ENCODE measurements at regions of chr1 and their contacts with region 1.

Region 1: GRCh38 chr1:6727535-6727934 is 25.9 kb upstream of the DNAJC11 start:
- H3K4me3 Mint-ChIP-seq: no peak overlapping the region
- H3K27ac Mint-ChIP-seq: no peak overlapping the region
- H3K4me1 Mint-ChIP-seq: peaks cover 5% of the 10 kb centered on the region
- H3K27me3 Mint-ChIP-seq: peaks cover 4% of the 10 kb centered on the region

Region 2: GRCh38 chr1:6743189-6744101 is 15.9 kb after region 1 on chr1:
- intact Hi-C with region 1: no loop called
- H3K4me3 Mint-ChIP-seq: peak overlapping the region; percentile 53
- H3K27ac Mint-ChIP-seq: peak overlapping the region; percentile 93
- H3K4me1 Mint-ChIP-seq: peaks cover 39% of the 10 kb centered on the region
- H3K27me3 Mint-ChIP-seq: no peaks in the 10 kb centered on the region

Region 3: GRCh38 chr1:6784560-6785317 is 57.2 kb after region 1 on chr1:
- intact Hi-C with region 1: loop called (anchors 5 kb)
- H3K4me3 Mint-ChIP-seq: peak overlapping the region; percentile 92
- H3K27ac Mint-ChIP-seq: peak overlapping the region; percentile 98
- H3K4me1 Mint-ChIP-seq: peaks cover 43% of the 10 kb centered on the region
- H3K27me3 Mint-ChIP-seq: no peaks in the 10 kb centered on the region

Region 4: DNA sequence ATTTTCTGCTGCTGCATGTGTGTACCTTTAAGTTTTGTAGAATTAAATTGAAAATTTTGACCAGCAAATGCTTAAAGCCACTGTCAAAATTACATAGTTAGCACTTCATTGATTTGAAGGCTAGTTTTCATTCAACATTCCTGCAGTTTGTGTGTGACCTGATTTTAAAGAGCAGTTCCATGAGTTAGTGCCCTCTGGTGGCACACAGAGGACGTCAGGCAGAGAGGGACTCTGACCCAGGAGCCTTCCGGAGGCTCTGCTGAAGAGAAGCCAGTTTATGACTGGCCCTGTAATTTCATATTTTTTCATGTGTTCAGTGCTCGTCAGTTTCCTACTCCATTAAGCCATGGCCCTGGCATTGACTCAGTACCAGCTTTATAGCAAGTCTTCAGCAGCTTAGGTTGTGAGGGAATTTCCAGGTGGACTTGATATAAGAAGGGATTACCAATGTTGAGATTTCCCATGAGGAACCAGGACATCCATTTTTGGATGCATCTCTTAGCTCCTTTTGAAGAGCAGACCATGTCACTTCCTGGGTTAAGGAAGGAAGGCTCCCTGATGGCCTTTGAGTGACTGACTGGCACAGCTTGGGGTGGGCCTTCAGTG is 162.4 kb after region 1 on chr1:
- intact Hi-C with region 1: loop called (anchors 2 kb)
- H3K4me3 Mint-ChIP-seq: no peak overlapping the region
- H3K27ac Mint-ChIP-seq: no peak overlapping the region
- H3K4me1 Mint-ChIP-seq: peaks cover 4% of the 10 kb centered on the region
- H3K27me3 Mint-ChIP-seq: no peaks in the 10 kb centered on the region

Region 5: GRCh38 chr1:7070389-7071029 is 343.0 kb after region 1 on chr1:
- intact Hi-C with region 1: loop called (anchors 5 kb)
- H3K4me3 Mint-ChIP-seq: no peak overlapping the region
- H3K27ac Mint-ChIP-seq: no peak overlapping the region
- H3K4me1 Mint-ChIP-seq: no peaks in the 10 kb centered on the region
- H3K27me3 Mint-ChIP-seq: peaks cover 18% of the 10 kb centered on the region

Region 6: DNA sequence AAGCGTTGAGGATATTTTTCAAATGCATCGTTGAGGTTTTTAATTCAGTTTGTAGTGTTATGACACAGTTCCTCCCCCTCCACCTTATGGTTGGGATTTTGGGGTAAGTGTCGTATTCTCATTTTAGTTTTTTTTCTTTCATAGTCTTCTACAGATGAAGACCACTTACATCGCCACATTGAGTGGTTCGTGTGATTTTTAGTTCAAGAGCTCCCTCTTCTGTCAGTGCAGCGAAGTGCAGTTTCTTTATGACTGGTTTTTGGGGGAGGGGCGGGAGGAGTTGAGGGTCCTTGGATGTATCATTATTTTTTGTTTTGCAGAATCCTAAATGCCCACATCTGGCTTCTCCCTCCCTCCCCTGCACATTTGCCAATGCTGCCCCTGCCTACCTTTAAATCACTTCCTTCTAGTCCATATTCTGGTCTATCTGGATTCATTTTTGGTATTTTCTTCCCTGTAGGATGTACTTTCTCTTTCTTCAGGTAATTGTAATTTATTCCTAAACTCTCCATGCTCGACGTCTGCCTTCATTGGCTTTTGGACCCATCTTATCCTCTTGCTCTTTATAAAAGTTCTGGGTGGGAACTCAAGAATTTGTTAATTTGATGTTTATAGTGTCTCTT is 490.8 kb after region 1 on chr1:
- intact Hi-C with region 1: loop called (anchors 5 kb)
- H3K4me3 Mint-ChIP-seq: no peak overlapping the region
- H3K27ac Mint-ChIP-seq: no peak overlapping the region
- H3K4me1 Mint-ChIP-seq: no peaks in the 10 kb centered on the region
- H3K27me3 Mint-ChIP-seq: peaks cover 5% of the 10 kb centered on the region